PC-9 (cell line): ENCODE measurements at regions of chr5 and their contacts with region 1.

Region 1: GRCh38 chr5:176822041-176822792 is 11.9 kb downstream of the UNC5A start:
- DNase-seq: peak; percentile 96 to 99
- H3K4me3 ChIP-seq: peak overlapping the region; percentile 56; the same call in 1 of the 2 replicates
- H3K27ac ChIP-seq: peak overlapping the region; percentile 99
- H3K4me1 ChIP-seq: peaks cover 40% of the 10 kb centered on the region
- H3K27me3 ChIP-seq: no peaks in the 10 kb centered on the region
- CTCF ChIP-seq: no peak

Region 2: DNA sequence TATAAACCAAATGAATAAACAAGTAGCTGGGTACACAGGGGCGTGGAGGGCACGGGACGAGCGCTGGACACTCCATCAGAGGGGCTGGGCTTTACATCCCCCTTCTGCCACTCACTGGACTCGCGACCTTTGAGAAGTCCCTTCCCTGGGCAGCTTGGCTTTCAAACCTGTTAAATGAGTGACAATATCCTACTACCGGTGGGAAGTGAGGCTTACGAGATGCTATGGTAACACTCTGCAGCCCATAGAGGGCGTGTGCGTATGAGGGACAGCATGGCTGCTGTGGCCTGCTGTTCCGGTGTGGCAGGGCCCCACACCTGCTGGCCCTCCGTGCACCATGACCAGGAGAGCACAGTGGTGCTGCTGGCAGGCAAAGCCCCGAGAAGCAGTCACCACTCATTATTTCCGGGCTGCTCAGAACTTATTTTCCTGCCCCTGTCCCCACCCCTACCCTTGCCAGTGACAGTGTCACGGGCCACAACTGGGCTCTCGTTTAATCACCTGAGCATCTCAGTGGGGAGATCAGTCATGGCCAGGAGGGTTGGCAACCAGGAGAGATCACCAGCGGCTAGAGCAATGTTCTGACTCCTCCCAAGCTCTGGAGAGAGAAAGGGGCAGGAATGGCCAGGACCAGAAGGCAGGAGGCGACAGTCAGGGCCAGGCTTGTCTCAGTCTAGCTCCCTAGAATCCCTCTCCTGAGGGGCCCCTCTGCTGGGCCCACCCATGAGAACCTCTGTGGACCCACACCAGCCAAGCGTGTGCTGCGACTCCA is 416.4 kb before region 1 on chr5:
- CTCF ChIA-PET with region 1: no interaction called
- POLR2A ChIA-PET with region 1: no interaction called
- intact Hi-C with region 1: no loop called
- DNase-seq: peak in 1 of 2 experiments; percentile 25
- H3K4me3 ChIP-seq: no peak overlapping the region
- H3K27ac ChIP-seq: no peak overlapping the region
- H3K4me1 ChIP-seq: peaks cover 17% of the 10 kb centered on the region
- H3K27me3 ChIP-seq: no peaks in the 10 kb centered on the region
- CTCF ChIP-seq: no peak

Region 3: GRCh38 chr5:176415952-176416924 is 406.0 kb before region 1 on chr5 and contains the start of gene CLTB:
- CTCF ChIA-PET with region 1: no interaction called
- POLR2A ChIA-PET with region 1: interaction called, 3 read pairs
- intact Hi-C with region 1: loop called (anchors 5 kb)
- DNase-seq: peak; percentile 85 to 87
- H3K4me3 ChIP-seq: peak within 1 kb of the TSS; percentile 98
- H3K27ac ChIP-seq: peak within 1 kb of the TSS; percentile 94
- H3K4me1 ChIP-seq: peaks cover 81% of the 10 kb centered on the region
- H3K27me3 ChIP-seq: no peaks in the 10 kb centered on the region
- CTCF ChIP-seq: peak; percentile 29; the same call in 1 of the 2 replicates
- total RNA-seq, gene CLTB: 123 and 126 TPM in 2 replicates

Region 4: GRCh38 chr5:176660860-176661641 is 161.2 kb before region 1 on chr5:
- CTCF ChIA-PET with region 1: interaction called, 4 read pairs
- POLR2A ChIA-PET with region 1: interaction called, 6 read pairs
- intact Hi-C with region 1: loop called (anchors 2 kb)
- DNase-seq: peak; percentile 50 to 73
- H3K4me3 ChIP-seq: no peak overlapping the region
- H3K27ac ChIP-seq: no peak overlapping the region
- H3K4me1 ChIP-seq: no peaks in the 10 kb centered on the region
- H3K27me3 ChIP-seq: no peaks in the 10 kb centered on the region
- CTCF ChIP-seq: peak; percentile 95

Region 5: GRCh38 chr5:176754376-176754973 is 67.7 kb before region 1 on chr5:
- CTCF ChIA-PET with region 1: interaction called, 15 read pairs
- POLR2A ChIA-PET with region 1: no interaction called
- intact Hi-C with region 1: no loop called
- DNase-seq: peak in 1 of 2 experiments; percentile 40
- H3K4me3 ChIP-seq: no peak overlapping the region
- H3K27ac ChIP-seq: no peak overlapping the region
- H3K4me1 ChIP-seq: no peaks in the 10 kb centered on the region
- H3K27me3 ChIP-seq: no peaks in the 10 kb centered on the region
- CTCF ChIP-seq: no peak

Region 6: GRCh38 chr5:177086924-177087706 is 264.9 kb after region 1 on chr5:
- CTCF ChIA-PET with region 1: no interaction called
- POLR2A ChIA-PET with region 1: interaction called, 3 read pairs
- intact Hi-C with region 1: loop called (anchors 5 kb)
- DNase-seq: peak in 1 of 2 experiments; percentile 77
- H3K4me3 ChIP-seq: peak overlapping the region; percentile 65
- H3K27ac ChIP-seq: no peak overlapping the region
- H3K4me1 ChIP-seq: no peaks in the 10 kb centered on the region
- H3K27me3 ChIP-seq: 0 out of 2 replicates have a peak, but pooled peaks cover 5% of the 10 kb centered on the region
- CTCF ChIP-seq: peak; percentile 62

Region 7: GRCh38 chr5:177537389-177538361 is 715.5 kb after region 1 on chr5:
- CTCF ChIA-PET with region 1: no interaction called
- POLR2A ChIA-PET with region 1: no interaction called
- intact Hi-C with region 1: no loop called
- DNase-seq: no peak
- H3K4me3 ChIP-seq: no peak overlapping the region
- H3K27ac ChIP-seq: no peak overlapping the region
- H3K4me1 ChIP-seq: no peaks in the 10 kb centered on the region
- H3K27me3 ChIP-seq: no peaks in the 10 kb centered on the region
- CTCF ChIP-seq: no peak